HEK293 (cell line): ENCODE measurements at regions of chr1 and their contacts with region 1.

Region 1: DNA sequence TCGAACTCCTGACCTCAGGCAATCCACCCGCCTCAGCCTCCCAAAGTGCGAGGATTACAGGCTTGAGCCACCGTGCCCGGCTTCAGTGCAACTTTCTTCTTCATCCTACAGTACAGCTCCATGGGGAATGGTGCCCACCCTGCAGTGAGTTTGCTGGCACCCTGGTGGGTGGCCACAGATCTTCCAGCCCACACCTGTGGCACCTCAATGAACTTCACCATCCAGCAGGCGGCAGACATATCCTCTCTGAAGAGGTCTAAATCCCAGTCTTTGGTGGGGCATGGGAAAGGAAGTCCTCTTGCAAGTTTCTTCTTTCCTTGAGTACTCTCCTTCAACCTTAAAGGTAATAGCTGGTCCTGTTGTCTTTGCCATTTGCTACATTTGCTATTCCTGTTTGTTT is 18.1 kb upstream of the ZBTB8A start:
- H3K4me3 ChIP-seq: no peak overlapping the region
- H3K27ac ChIP-seq: no peak overlapping the region
- H3K4me1 ChIP-seq: no peaks in the 10 kb centered on the region
- CTCF ChIP-seq: no peak

Region 2: DNA sequence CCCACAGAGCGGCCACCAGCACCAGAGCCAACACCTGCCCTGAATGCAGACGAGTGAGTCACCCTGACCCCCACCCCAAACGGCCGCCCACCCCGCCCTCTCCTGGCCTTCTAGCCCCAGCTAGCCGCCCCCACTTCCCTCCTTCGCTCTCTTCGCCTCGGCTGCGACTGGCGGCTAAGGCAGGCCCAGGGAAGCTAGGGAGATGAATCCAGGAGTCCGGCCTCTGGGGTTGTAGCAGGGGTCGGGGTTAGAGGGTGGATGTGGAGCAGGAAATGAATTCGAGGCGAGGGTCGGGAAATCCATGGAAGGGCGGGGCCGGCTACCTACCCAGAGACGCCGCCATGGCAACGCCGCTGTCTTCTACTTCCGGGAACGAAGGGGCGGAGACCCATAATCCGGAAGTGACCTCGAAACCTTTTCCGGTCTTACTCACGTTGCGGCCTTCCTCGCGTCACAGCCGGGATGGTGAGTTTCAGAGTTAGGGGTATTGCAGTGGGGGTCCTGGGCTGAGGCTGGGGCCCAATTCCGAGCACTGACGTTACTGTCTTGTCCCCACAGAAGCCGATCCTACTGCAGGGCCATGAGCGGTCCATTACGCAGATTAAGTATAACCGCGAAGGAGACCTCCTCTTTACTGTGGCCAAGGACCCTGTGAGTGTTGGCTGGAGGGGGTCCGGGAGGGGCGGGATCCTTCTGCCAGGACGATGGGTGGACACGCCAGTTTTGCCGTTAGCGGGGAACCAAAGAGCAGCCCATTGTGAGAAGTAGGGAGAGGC is 299.0 kb before region 1 on chr1 and contains the starts of genes EIF3I and TMEM234:
- CTCF ChIA-PET with region 1: no interaction called
- POLR2A ChIA-PET with region 1: no interaction called
- H3K4me3 ChIP-seq: peak within 1 kb of the TSS; percentile 83
- H3K27ac ChIP-seq: peak within 1 kb of the TSS; percentile 53
- H3K4me1 ChIP-seq: peaks cover 2% of the 10 kb centered on the region; the same call in 1 of the 2 replicates
- CTCF ChIP-seq: no peak

Region 3: GRCh38 chr1:32438136-32438535 is 83.0 kb before region 1 on chr1:
- CTCF ChIA-PET with region 1: interaction called, 10 read pairs
- POLR2A ChIA-PET with region 1: no interaction called
- H3K4me3 ChIP-seq: no peak overlapping the region
- H3K27ac ChIP-seq: no peak overlapping the region
- H3K4me1 ChIP-seq: no peaks in the 10 kb centered on the region
- CTCF ChIP-seq: no peak

Region 4: DNA sequence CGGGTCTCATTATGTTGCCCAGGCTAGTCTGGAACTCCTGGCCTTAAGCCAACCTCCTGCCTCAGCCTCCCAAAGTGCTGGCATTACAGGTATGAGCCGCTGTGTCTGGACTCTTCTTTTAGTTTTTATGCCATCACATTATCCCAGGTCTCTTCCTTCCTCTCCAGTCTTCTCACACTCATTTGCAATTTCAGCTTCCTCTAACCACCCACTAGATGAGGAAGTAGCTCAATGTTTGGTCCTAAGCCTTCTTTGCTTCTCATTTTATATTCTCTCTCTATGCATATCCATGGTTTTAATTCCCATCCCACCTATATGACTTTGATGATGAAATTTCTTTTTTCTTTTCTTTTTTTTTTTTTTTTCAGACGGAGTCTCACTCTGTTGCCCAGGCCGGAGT is 15.0 kb after region 1 on chr1:
- CTCF ChIA-PET with region 1: interaction called, 14 read pairs
- POLR2A ChIA-PET with region 1: interaction called, 7 read pairs
- H3K4me3 ChIP-seq: no peak overlapping the region
- H3K27ac ChIP-seq: no peak overlapping the region
- H3K4me1 ChIP-seq: peaks cover 9% of the 10 kb centered on the region
- CTCF ChIP-seq: no peak